Common myeloid progenitor, CD34-positive (primary cell): ENCODE measurements at regions of chr3 and their contacts with region 1.

Region 1: GRCh38 chr3:8416965-8417364 is 84.7 kb upstream of the LMCD1 start:
- DNase-seq: peak; percentile 1 to 8 (median 3)
- H3K4me3 ChIP-seq: no peak overlapping the region
- H3K27ac ChIP-seq: no peak overlapping the region
- H3K4me1 ChIP-seq: peaks cover 0 to 2% (median 0%) of the 10 kb centered on the region in 4 experiments
- H3K27me3 ChIP-seq: no peaks in the 10 kb centered on the region

Region 2: DNA sequence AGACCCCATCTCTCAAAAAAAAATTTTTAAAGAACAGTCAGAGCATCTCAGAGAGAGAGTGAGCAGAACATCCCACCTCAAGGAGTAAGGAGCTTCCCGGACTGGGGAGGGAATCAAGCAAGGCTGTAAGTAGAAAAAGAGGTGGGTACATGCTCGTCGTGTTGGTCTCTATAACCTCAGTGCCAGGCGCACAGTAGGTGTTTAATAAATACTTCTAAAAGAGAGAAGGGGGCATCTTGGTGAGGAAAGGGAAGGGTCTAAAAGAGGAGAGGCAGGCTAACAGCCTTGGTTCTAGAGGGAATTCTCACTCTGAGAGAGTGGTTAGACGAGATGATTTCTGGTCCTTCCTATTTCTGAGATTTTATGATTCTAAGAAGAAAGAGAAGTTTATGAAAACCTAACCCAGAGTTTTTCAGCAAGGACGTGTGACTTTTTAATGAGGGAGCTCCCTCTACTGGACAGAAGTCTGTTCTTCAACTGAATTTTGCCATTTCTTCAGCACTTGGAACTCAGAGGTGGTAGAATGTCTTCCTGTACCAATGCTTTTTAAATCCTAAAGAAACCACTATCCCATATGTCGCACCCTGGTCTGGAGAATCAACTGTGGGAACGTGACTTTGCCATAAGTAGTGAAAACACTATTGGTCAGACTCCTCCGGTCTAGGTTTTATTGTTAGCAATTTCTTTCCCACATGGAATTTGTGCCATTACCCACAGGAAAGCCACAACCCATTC is 115.1 kb before region 1 on chr3:
- CTCF ChIA-PET with region 1: interaction called, 19 read pairs
- POLR2A ChIA-PET with region 1: no interaction called
- DNase-seq: peak; percentile 64 to 86 (median 82)
- H3K4me3 ChIP-seq: no peak overlapping the region
- H3K27ac ChIP-seq: no peak overlapping the region
- H3K4me1 ChIP-seq: peaks cover 0 to 3% (median 0%) of the 10 kb centered on the region in 4 experiments
- H3K27me3 ChIP-seq: no peaks in the 10 kb centered on the region

Region 3: DNA sequence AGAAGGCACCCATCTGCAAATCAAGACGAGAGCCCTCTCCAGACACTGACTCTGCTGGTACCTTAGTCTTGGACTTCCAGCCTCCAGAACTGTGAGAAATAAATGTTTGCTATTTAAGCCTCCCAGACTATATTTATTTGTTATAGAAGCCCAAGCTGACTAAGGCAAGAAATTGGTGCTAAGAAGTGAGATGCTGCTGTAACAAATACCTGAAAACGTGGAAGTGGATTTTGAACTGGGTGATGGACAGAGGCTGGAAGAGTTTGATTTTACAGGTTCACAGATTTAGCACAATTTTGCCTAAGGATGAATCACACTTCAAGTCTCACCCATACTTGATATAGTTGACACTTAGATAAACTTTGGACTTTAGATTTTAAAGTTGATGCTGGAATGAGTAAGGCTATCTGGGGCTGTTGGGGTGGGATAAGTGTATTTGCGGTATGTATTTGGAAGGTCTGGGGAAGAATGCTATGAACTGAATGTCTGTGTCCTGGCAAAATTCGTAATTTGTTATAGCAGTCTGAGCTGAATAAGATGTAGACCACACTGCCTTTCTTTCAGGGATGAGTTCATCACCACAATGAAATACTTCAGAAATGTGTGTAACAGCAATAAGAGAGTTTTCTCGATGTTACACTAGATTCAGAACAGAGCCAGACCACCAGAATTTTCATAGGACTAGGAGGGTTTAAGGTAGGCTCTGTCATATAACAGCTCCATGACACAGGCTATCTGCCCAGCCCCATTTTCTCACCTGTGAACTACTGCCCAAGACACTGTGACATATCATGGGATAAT is 35.9 kb before region 1 on chr3:
- CTCF ChIA-PET with region 1: no interaction called
- POLR2A ChIA-PET with region 1: no interaction called
- DNase-seq: no peak
- H3K4me3 ChIP-seq: no peak overlapping the region
- H3K27ac ChIP-seq: no peak overlapping the region
- H3K4me1 ChIP-seq: no peaks in the 10 kb centered on the region
- H3K27me3 ChIP-seq: no peaks in the 10 kb centered on the region

Region 4: GRCh38 chr3:8450621-8451020 is 33.7 kb after region 1 on chr3:
- CTCF ChIA-PET with region 1: no interaction called
- POLR2A ChIA-PET with region 1: no interaction called
- DNase-seq: no peak
- H3K4me3 ChIP-seq: no peak overlapping the region
- H3K27ac ChIP-seq: no peak overlapping the region
- H3K4me1 ChIP-seq: no peaks in the 10 kb centered on the region
- H3K27me3 ChIP-seq: peaks cover 0 to 5% (median 0%) of the 10 kb centered on the region in 5 experiments